Esophagus squamous epithelium (tissue), 5 donors: ENCODE measurements at regions of chr5 and their contacts with region 1.

Region 1: DNA sequence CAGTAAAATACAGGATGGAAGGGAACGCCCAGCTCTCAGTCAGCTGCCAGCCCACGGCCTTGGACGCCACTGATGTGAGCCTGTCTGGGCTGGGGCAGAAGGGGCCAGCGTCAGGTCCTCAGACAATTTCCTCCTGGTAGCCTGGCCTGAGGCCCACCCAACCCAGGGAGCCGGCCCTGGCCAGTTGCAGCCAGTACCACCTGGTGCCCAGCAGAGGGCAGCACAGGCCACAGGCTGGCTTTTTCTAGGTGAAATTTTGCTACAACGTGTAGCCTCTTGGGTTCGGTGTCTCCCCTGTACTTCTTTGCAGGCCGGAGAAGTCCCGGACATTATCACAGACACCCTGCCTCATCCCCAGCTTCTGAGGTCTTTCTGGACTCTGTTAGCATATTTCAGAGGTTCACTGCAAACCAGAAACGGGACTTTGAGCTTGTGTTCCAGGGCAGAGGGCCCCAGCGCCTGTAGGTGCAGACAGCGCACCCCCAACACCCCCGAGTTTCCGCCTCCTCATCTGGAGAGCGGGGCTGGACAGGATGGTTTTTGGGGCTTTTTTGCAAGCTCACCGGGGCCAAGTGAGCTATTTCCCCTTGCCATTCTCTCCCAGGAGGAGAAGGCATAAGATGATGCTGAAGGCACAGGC is 45.9 kb upstream of the KCNMB1 start:
- DNase-seq: no peak
- H3K4me3 ChIP-seq: no peak overlapping the region
- H3K27ac ChIP-seq: no peak overlapping the region
- H3K4me1 ChIP-seq: no peaks in the 10 kb centered on the region
- H3K27me3 ChIP-seq: peaks cover 0 to 26% (median 0%) of the 10 kb centered on the region in 4 donors
- CTCF ChIP-seq: peak; percentile 82 to 98 (median 92)
- POLR2A ChIP-seq: no peak

Region 2: DNA sequence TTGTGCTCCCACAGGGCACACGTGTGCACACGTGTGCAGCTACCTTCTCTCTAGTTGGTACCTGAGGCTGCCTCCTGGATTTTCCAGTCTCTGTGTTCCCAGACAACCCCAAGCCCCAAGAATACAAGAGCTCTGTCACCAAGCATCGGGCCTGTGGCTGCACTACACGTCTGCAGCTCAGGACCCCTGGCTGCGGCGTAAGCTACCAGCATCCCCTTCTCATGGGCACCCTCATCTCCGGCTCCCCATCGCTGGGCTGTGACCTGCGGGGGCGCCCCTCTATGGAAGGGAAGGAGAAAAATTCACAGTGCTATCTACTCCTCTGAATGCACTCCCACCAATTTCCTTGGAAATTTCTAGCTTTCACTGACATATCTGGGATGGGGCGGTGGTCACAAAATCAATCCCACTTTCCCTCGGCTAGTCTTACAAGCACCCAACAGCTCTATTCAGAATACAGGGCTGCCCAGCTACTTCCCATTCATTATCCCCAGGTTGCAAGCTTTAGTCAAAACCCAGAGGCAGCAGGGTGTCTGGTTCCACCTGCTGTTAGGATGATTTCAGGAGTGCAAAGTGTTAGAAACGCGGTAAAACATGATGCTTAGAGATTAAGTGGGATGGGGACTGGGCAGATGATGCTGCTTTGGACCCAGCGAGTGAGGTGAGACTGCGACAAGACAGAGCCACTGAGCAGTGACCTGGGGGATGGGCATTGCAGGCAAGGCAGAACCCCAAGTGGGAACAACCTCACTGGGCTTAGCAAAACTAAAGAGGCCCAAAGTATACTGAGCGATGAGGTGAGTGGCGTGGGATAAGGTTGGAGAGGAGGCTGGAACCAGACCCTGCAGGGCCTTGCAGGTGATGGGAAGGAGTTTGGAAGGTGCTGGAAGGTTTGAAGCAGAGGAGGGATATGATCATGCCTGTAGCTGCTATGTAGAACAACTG is 190.4 kb after region 1 on chr5:
- intact Hi-C with region 1: loop called (anchors 5 kb)
- DNase-seq: no peak
- H3K4me3 ChIP-seq: no peak overlapping the region
- H3K27ac ChIP-seq: no peak overlapping the region
- H3K4me1 ChIP-seq: no peaks in the 10 kb centered on the region
- H3K27me3 ChIP-seq: peaks cover 0 to 7% (median 0%) of the 10 kb centered on the region in 4 donors
- CTCF ChIP-seq: no peak
- POLR2A ChIP-seq: no peak

Region 3: GRCh38 chr5:170716396-170716795 is 281.3 kb after region 1 on chr5:
- intact Hi-C with region 1: no loop called
- DNase-seq: no peak
- H3K4me3 ChIP-seq: no peak overlapping the region
- H3K27ac ChIP-seq: no peak overlapping the region
- H3K4me1 ChIP-seq: no peaks in the 10 kb centered on the region
- H3K27me3 ChIP-seq: peaks cover 0 to 46% (median 0%) of the 10 kb centered on the region in 4 donors
- CTCF ChIP-seq: no peak
- POLR2A ChIP-seq: no peak